ENCODE measurements at regions of chr2 and their contacts with region 1.

Region 1: GRCh38 chr2:218671654-218672566 is at the starts of genes RNF25 and STK36:
- DNase-seq: peak; percentile 90
- H3K4me3 Mint-ChIP-seq: peak within 1 kb of the TSS; percentile 96
- H3K27ac Mint-ChIP-seq: peak within 1 kb of the TSS; percentile 89
- H3K4me1 Mint-ChIP-seq: peaks cover 22% of the 10 kb centered on the region
- H3K27me3 Mint-ChIP-seq: no peaks in the 10 kb centered on the region
- total RNA-seq, gene RNF25: 15.2 to 15.6 TPM
- total RNA-seq, gene STK36: 15.9 to 19.0 TPM

Region 2: GRCh38 chr2:218691234-218691633 is 19.3 kb after region 1 on chr2:
- CTCF ChIA-PET with region 1: interaction called, 13 read pairs
- POLR2A ChIA-PET with region 1: no interaction called
- intact Hi-C with region 1: no loop called
- DNase-seq: no peak
- H3K4me3 Mint-ChIP-seq: no peak overlapping the region
- H3K27ac Mint-ChIP-seq: no peak overlapping the region
- H3K4me1 Mint-ChIP-seq: no peaks in the 10 kb centered on the region
- H3K27me3 Mint-ChIP-seq: no peaks in the 10 kb centered on the region

Region 3: DNA sequence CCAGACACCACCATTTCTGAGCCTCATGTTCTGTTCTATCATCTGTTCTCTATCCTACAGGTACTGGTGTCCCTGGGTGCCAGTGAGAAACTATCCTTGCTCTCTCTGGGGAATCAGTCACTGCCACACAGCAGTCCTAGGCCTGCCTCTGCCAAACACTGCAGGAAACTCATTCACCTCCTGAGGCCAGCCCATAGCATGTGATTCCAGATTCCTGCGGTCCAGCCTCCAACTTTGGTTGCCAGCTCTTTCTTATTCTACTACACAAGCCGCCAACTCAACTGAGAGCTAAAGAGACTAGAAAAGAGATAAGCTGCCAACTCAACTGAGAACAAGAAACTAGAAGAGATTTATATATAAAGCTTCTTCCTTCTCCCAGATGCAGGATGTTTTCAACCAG is 29.9 kb after region 1 on chr2:
- CTCF ChIA-PET with region 1: no interaction called
- POLR2A ChIA-PET with region 1: no interaction called
- intact Hi-C with region 1: no loop called
- DNase-seq: no peak
- H3K4me3 Mint-ChIP-seq: no peak overlapping the region
- H3K27ac Mint-ChIP-seq: no peak overlapping the region
- H3K4me1 Mint-ChIP-seq: no peaks in the 10 kb centered on the region
- H3K27me3 Mint-ChIP-seq: no peaks in the 10 kb centered on the region

Region 4: GRCh38 chr2:218733171-218734021 is 61.5 kb after region 1 on chr2:
- CTCF ChIA-PET with region 1: no interaction called
- POLR2A ChIA-PET with region 1: no interaction called
- intact Hi-C with region 1: no loop called
- DNase-seq: peak; percentile 63
- H3K4me3 Mint-ChIP-seq: no peak overlapping the region
- H3K27ac Mint-ChIP-seq: peak overlapping the region; percentile 19
- H3K4me1 Mint-ChIP-seq: peaks cover 28% of the 10 kb centered on the region
- H3K27me3 Mint-ChIP-seq: no peaks in the 10 kb centered on the region

Region 5: GRCh38 chr2:218754201-218754600 is 82.3 kb after region 1 on chr2:
- CTCF ChIA-PET with region 1: no interaction called
- POLR2A ChIA-PET with region 1: no interaction called
- intact Hi-C with region 1: no loop called
- DNase-seq: no peak
- H3K4me3 Mint-ChIP-seq: no peak overlapping the region
- H3K27ac Mint-ChIP-seq: no peak overlapping the region
- H3K4me1 Mint-ChIP-seq: no peaks in the 10 kb centered on the region
- H3K27me3 Mint-ChIP-seq: no peaks in the 10 kb centered on the region

Measured in activated CD4-positive, alpha-beta memory T cell treated with anti-CD3 and anti-CD28 coated beads for 36 hours (primary cell).